ENCODE measurements at regions of chr9 and their contacts with region 1.

Region 1: GRCh38 chr9:136122425-136123383 is 4.0 kb upstream of the TMEM250 start:
- DNase-seq: no peak
- ATAC-seq: peak; percentile 58
- H3K4me3 ChIP-seq: no peak overlapping the region
- H3K27ac ChIP-seq: 0 out of 2 replicates have a peak overlapping the region, but pooled peaks have one; percentile 4
- H3K4me1 ChIP-seq: peaks cover 8% of the 10 kb centered on the region
- H3K27me3 ChIP-seq: no peaks in the 10 kb centered on the region
- CTCF ChIP-seq: peak; percentile 93

Region 2: GRCh38 chr9:135961277-135961705 is 161.4 kb before region 1 on chr9 and contains the start of gene UBAC1:
- CTCF ChIA-PET with region 1: no interaction called
- POLR2A ChIA-PET with region 1: no interaction called
- in situ Hi-C with region 1: no loop called
- intact Hi-C with region 1: loop called (anchors 2 kb)
- DNase-seq: peak; percentile 63
- ATAC-seq: peak; percentile 95
- H3K4me3 ChIP-seq: peak within 1 kb of the TSS; percentile 70
- H3K27ac ChIP-seq: peak within 1 kb of the TSS; percentile 71
- H3K4me1 ChIP-seq: no peaks in the 10 kb centered on the region
- H3K27me3 ChIP-seq: no peaks in the 10 kb centered on the region
- CTCF ChIP-seq: no peak; the same call in 1 of the 2 replicates
- total RNA-seq, gene UBAC1: 38.0 TPM

Region 3: DNA sequence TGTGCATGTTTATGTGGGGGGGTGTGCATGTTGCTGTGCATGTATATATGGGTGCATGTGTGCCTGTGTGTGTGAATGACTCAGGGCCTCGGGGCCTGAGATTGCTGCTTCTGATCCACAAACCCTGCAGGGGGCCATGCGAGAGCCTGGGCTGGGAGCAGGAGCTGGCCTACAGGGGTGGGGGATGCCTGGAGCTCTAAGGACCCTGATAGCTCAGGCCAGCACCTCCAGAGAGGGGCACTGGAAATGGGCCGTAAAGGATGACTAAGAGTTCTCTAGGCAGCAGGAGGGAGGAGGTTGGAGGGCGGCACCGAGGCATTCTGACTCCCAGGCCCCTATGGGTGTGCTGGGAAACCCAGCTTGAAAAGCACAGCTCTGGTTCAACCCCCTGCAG is 154.6 kb before region 1 on chr9:
- CTCF ChIA-PET with region 1: interaction called, 12 read pairs
- POLR2A ChIA-PET with region 1: no interaction called
- in situ Hi-C with region 1: no loop called
- intact Hi-C with region 1: loop called (anchors 2 kb)
- DNase-seq: no peak
- ATAC-seq: no peak; the same call in 1 of the 2 replicates
- H3K4me3 ChIP-seq: no peak overlapping the region
- H3K27ac ChIP-seq: no peak overlapping the region
- H3K4me1 ChIP-seq: peaks cover 3% of the 10 kb centered on the region; the same call in 1 of the 2 replicates
- H3K27me3 ChIP-seq: no peaks in the 10 kb centered on the region
- CTCF ChIP-seq: no peak